ENCODE measurements at regions of chr16 and their contacts with region 1.

Region 1: DNA sequence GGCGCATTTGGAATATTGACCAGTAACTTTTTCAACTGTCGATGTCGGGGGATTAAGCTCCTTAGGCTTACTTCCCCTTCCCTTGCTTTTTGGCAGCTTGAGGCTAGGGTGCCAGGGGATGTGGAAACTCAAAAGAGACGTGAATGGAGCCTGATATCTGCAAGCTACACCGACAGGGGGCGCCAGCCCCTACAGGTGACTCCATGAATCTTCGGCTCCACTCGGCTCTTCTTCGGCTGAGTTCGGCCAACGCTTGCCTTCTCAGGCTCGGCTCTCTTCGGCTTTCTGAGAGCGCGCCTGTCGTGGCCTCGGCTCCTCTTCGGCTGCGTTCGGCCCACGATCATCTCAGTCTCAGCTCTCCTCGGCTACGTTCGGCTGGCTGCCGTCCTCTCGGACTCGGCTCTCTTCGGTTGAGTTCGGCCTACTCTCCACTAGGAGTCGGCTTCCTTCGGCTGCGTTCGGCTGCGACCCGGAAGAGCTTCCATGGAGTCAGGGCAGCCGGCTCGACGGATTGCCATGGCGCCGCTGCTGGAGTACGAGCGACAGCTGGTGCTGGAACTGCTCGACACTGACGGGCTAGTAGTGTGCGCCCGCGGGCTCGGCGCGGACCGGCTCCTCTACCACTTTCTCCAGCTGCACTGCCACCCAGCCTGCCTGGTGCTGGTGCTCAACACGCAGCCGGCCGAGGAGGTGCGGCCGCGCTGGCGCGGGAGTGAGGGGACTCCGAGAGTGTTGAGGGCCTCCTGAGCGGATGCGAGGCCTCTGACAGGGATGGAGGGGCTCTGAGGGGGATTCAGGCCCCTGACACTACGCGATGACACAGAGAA is at the start of gene ERCC4:
- DNase-seq: peak; percentile 100
- ATAC-seq: peak; percentile 99
- H3K4me3 ChIP-seq: peak within 1 kb of the TSS; percentile 89 to 98 (median 98)
- H3K27ac ChIP-seq: peak within 1 kb of the TSS; percentile 49
- H3K4me1 ChIP-seq: peaks cover 38% of the 10 kb centered on the region
- H3K27me3 ChIP-seq: no peaks in the 10 kb centered on the region; a peak in 1 of 5 replicates
- CTCF ChIP-seq: peak; percentile 91
- EP300 ChIP-seq: no peak
- POLR2A ChIP-seq: peak; percentile 92 to 97
- RAD21 ChIP-seq: peak; percentile 48
- total RNA-seq, gene ERCC4: 15.2 and 27.9 TPM in 2 replicates

Region 2: GRCh38 chr16:13906168-13907089 is 13.5 kb before region 1 on chr16:
- CTCF ChIA-PET with region 1: interaction called, 29 read pairs
- POLR2A ChIA-PET with region 1: interaction called, 5 read pairs
- in situ Hi-C with region 1: no loop called
- intact Hi-C with region 1: no loop called
- DNase-seq: no peak
- ATAC-seq: no peak
- H3K4me3 ChIP-seq: no peak overlapping the region
- H3K27ac ChIP-seq: no peak overlapping the region
- H3K4me1 ChIP-seq: peaks cover 27% of the 10 kb centered on the region
- H3K27me3 ChIP-seq: no peaks in the 10 kb centered on the region
- CTCF ChIP-seq: no peak
- EP300 ChIP-seq: no peak
- POLR2A ChIP-seq: no peak
- RAD21 ChIP-seq: no peak

Region 3: DNA sequence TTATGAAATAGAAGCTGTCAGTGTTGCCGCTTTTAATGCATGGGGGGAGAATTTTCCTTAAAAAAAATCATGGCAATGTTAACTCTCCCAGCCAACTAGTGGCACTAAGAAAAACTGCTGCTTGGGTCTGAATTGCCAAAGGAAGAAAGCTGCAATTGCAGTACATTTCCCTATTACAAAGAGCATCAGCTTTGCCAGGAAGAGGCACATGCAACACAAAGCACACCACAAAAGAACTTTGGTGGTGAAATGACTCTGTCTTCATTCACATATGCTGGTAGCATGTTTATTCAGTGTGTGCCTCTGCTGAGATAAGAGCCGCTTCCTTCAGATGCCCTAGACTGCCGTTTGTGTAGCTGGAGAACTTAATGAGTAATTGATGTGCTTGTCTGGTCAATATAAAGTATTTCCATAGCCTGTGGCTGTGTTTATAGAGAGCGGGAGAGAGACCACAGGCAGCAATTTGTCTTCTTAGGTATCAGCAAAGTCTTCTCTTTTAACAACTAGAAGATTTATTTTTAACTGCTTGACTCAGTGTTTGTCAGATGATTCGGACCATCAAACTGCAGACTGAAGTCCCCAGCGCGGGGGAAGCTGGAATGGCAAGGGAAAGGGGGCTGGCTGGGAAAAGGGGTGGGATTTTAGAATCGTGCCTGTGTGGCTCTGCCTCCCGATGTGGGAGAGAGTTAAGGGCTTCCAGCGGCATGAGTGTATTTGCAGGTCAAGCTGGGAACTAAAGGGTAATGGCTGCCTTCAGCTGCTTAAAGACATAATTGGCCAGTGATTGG is 266.3 kb after region 1 on chr16:
- CTCF ChIA-PET with region 1: no interaction called
- POLR2A ChIA-PET with region 1: interaction called, 3 read pairs
- in situ Hi-C with region 1: no loop called
- intact Hi-C with region 1: loop called (anchors 5 kb)
- DNase-seq: no peak
- ATAC-seq: peak; percentile 47; the same call in 2 of the 3 replicates
- H3K4me3 ChIP-seq: no peak overlapping the region
- H3K27ac ChIP-seq: no peak overlapping the region
- H3K4me1 ChIP-seq: no peaks in the 10 kb centered on the region
- H3K27me3 ChIP-seq: no peaks in the 10 kb centered on the region
- CTCF ChIP-seq: no peak
- EP300 ChIP-seq: no peak
- POLR2A ChIP-seq: no peak
- RAD21 ChIP-seq: 0 out of 2 replicates have a peak, but pooled peaks have one; percentile 17

Region 4: DNA sequence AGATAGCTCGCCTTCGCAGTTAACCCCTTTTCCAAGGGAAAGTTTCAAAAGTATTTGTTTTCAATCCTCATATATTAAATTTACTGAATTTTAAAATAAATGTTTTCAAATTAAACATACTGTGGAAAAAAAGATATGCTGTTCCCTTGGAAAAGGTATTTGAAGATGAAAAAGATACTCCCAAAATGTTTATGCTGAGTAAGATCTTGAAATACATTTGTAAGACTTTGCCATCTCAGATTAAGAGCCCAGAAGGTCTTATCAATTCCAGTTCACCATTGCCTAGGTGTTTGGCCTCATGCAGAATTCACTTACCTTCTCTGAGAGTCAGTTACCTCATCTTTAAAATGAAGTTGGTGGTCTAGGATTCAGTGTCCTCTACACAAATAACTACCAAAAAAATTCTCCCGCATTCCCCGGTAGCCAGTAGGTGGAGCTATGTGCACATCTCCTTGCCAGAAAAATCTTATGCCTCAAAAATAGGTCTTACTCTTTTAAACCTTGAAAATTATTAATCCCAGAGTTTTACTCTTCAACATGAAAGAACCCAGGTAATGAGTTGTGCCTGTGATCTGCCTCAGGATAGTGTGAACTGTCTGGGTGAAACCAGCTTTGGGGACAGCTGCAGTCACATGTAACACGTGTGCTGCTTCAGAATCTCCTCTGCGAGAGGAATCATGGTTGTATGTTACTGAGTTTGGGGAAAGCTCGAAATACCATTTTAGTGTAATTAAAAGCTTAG is 329.6 kb after region 1 on chr16:
- CTCF ChIA-PET with region 1: interaction called, 8 read pairs
- POLR2A ChIA-PET with region 1: no interaction called
- in situ Hi-C with region 1: loop called (anchors 10 kb)
- intact Hi-C with region 1: loop called (anchors 2 kb)
- DNase-seq: peak; percentile 53
- ATAC-seq: 0 out of 3 replicates have a peak, but pooled peaks have one; percentile 27
- H3K4me3 ChIP-seq: no peak overlapping the region
- H3K27ac ChIP-seq: no peak overlapping the region
- H3K4me1 ChIP-seq: no peaks in the 10 kb centered on the region
- H3K27me3 ChIP-seq: no peaks in the 10 kb centered on the region
- CTCF ChIP-seq: peak; percentile 87
- EP300 ChIP-seq: no peak
- POLR2A ChIP-seq: no peak
- RAD21 ChIP-seq: peak; percentile 88

Measured in HepG2 (cell line).